Endothelial cell of umbilical vein (primary cell): ENCODE measurements at regions of chr15 and their contacts with region 1.

Region 1: GRCh38 chr15:35289024-35289617 is 204.0 kb upstream of the NANOGP8 start:
- DNase-seq: peak; percentile 71
- H3K4me3 ChIP-seq: no peak overlapping the region
- H3K27ac ChIP-seq: no peak overlapping the region
- H3K4me1 ChIP-seq: peaks cover 12% of the 10 kb centered on the region
- H3K27me3 ChIP-seq: peaks cover 18 to 51% of the 10 kb centered on the region in 2 experiments
- CTCF ChIP-seq: peak; percentile 59 to 63
- POLR2A ChIP-seq: no peak

Region 2: GRCh38 chr15:34964277-34964676 is 324.8 kb before region 1 on chr15:
- CTCF ChIA-PET with region 1: no interaction called
- POLR2A ChIA-PET with region 1: no interaction called
- dilution Hi-C with region 1: no loop called
- intact Hi-C with region 1: no loop called
- DNase-seq: no peak
- H3K4me3 ChIP-seq: no peak overlapping the region
- H3K27ac ChIP-seq: no peak overlapping the region
- H3K4me1 ChIP-seq: peaks cover 7% of the 10 kb centered on the region
- H3K27me3 ChIP-seq: no peaks in the 10 kb centered on the region
- CTCF ChIP-seq: no peak
- POLR2A ChIP-seq: no peak

Region 3: GRCh38 chr15:35306361-35306981 is 17.4 kb after region 1 on chr15:
- CTCF ChIA-PET with region 1: interaction called, 21 read pairs
- POLR2A ChIA-PET with region 1: no interaction called
- dilution Hi-C with region 1: no loop called
- intact Hi-C with region 1: loop called (anchors 1 kb)
- DNase-seq: peak; percentile 83
- H3K4me3 ChIP-seq: peak overlapping the region in 1 of 3 experiments; percentile 12
- H3K27ac ChIP-seq: peak overlapping the region; percentile 99
- H3K4me1 ChIP-seq: peaks cover 60% of the 10 kb centered on the region
- H3K27me3 ChIP-seq: no peaks in the 10 kb centered on the region
- CTCF ChIP-seq: no peak
- POLR2A ChIP-seq: no peak

Region 4: DNA sequence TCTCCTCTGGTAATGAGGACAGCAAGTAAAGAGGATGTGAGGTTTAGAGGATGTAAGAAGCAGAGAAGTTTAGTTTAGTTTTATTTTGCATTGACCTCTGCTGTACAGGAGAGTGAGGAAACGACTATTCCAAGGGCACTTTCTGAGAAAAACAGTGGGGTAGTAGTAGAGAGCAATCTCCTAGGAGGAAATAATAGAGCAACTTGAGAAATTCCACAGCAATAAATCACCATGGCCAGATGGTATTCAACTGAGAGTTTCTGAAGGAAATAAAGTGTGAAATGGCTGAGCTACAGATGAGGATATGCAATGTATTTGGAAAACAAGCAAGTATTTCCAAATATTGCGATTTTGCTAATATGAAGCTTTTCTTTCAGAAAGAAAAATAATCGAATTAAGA is 138.0 kb after region 1 on chr15:
- CTCF ChIA-PET with region 1: interaction called, 100 read pairs
- POLR2A ChIA-PET with region 1: no interaction called
- dilution Hi-C with region 1: no loop called
- intact Hi-C with region 1: no loop called
- DNase-seq: peak; percentile 90
- H3K4me3 ChIP-seq: no peak overlapping the region
- H3K27ac ChIP-seq: no peak overlapping the region
- H3K4me1 ChIP-seq: peaks cover 13% of the 10 kb centered on the region
- H3K27me3 ChIP-seq: no peaks in the 10 kb centered on the region
- CTCF ChIP-seq: no peak
- POLR2A ChIP-seq: no peak

Region 5: GRCh38 chr15:35450492-35450891 is 161.4 kb after region 1 on chr15:
- CTCF ChIA-PET with region 1: interaction called, 828 read pairs
- POLR2A ChIA-PET with region 1: no interaction called
- dilution Hi-C with region 1: no loop called
- intact Hi-C with region 1: no loop called
- DNase-seq: no peak
- H3K4me3 ChIP-seq: no peak overlapping the region
- H3K27ac ChIP-seq: no peak overlapping the region
- H3K4me1 ChIP-seq: peaks cover 4% of the 10 kb centered on the region
- H3K27me3 ChIP-seq: no peaks in the 10 kb centered on the region
- CTCF ChIP-seq: no peak
- POLR2A ChIP-seq: no peak

Region 6: GRCh38 chr15:35751413-35752133 is 462.5 kb after region 1 on chr15:
- CTCF ChIA-PET with region 1: interaction called, 30 read pairs
- POLR2A ChIA-PET with region 1: no interaction called
- dilution Hi-C with region 1: no loop called
- intact Hi-C with region 1: loop called (anchors 1 kb)
- DNase-seq: peak; percentile 85
- H3K4me3 ChIP-seq: no peak overlapping the region
- H3K27ac ChIP-seq: no peak overlapping the region
- H3K4me1 ChIP-seq: peaks cover 3% of the 10 kb centered on the region
- H3K27me3 ChIP-seq: no peaks in the 10 kb centered on the region
- CTCF ChIP-seq: peak; percentile 73 to 77
- POLR2A ChIP-seq: no peak

Region 7: DNA sequence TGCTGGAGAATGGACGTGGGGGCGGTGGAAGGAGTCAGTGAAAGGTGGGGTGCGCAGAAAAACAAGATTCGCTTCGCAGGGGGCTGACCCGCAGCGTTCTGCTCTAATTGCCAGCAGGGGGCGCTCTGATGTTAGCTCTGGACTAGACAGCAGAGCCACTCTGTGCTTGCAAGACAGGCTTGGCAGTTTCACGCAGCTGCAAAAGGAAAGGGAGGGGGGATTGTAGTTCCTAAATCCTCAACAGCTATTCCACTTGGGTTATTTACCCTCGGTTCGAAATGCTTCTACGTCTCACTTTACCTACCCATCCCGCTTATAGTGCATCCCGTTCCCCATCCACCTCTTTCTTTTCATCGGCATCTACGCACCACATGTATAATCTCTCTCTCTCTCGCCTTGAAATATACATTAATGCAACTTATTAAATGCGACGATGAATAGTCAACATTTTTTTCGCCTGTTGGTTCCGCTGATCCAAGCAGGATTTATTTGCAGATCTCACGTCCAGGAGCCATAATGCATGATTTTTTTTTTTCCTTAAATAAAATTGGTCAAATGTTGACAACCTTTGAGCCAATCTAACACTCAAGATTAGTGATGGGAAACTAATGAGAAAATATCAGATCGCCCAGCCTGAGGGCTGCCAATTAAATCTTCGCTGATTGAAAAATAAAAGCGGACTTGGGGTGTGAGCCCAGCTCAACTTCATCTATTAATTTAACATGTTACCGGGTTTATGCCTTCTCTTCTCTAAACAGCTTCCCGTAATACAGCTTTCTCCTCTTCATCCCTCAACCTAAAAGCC is 1594.8 kb after region 1 on chr15:
- CTCF ChIA-PET with region 1: no interaction called
- POLR2A ChIA-PET with region 1: no interaction called
- dilution Hi-C with region 1: no loop called
- intact Hi-C with region 1: loop called (anchors 5 kb)
- DNase-seq: peak; percentile 79
- H3K4me3 ChIP-seq: no peak overlapping the region
- H3K27ac ChIP-seq: no peak overlapping the region
- H3K4me1 ChIP-seq: peaks cover 11% of the 10 kb centered on the region
- H3K27me3 ChIP-seq: peaks cover 90 to 99% of the 10 kb centered on the region in 2 experiments
- CTCF ChIP-seq: peak; percentile 72 to 91
- POLR2A ChIP-seq: no peak